ENCODE measurements at regions of chr18 and their contacts with region 1.

Region 1: DNA sequence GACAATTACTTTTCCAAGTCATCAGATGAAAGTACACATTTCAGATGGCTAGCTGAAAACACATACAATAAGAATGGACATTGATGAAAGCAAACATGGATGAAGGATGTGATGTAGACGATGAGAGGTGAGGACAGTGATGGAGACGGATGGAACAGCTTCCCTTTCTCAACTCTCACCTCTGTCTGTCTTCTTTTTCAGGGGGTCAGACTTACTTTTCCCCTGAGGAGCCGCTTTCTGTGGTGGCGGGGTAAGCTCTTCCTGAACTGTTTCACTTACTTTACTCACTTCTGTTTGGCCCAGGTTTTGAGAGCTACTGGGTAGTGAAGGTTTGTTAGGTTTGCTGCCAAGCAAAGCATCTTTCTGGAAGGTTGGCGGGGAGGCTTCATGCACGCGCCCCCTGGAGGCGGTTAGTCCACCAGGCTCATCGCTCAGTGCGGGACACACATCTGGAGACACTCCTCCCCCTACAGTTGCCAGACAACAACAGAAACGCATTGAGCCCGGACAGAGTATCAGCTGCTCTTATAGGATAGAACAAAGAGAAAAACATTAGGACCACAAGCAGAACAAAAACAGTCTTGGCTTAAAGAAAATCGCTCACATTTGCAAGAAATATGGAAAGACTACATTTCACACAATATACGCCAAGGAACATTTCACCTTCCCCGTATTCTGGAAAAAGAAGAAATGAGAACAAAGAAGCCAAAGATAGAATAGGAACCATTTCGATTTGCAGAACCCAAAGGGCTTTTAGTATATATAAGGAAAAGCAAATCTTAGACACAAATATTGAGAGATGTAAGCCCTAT is 90.5 kb downstream of the MYOM1 start:
- DNase-seq: peak; percentile 87
- H3K4me3 ChIP-seq: no peak overlapping the region
- H3K27ac ChIP-seq: no peak overlapping the region
- H3K4me1 ChIP-seq: no peaks in the 10 kb centered on the region
- H3K27me3 ChIP-seq: no peaks in the 10 kb centered on the region
- CTCF ChIP-seq: peak; percentile 95 to 96
- POLR2A ChIP-seq: no peak

Region 2: GRCh38 chr18:2932247-2933181 is 196.7 kb before region 1 on chr18:
- CTCF ChIA-PET with region 1: interaction called, 45 read pairs
- POLR2A ChIA-PET with region 1: no interaction called
- dilution Hi-C with region 1: no loop called
- intact Hi-C with region 1: loop called (anchors 1 kb)
- DNase-seq: peak; percentile 64
- H3K4me3 ChIP-seq: no peak overlapping the region
- H3K27ac ChIP-seq: no peak overlapping the region
- H3K4me1 ChIP-seq: no peaks in the 10 kb centered on the region
- H3K27me3 ChIP-seq: no peaks in the 10 kb centered on the region
- CTCF ChIP-seq: peak; percentile 44 to 48
- POLR2A ChIP-seq: no peak

Region 3: DNA sequence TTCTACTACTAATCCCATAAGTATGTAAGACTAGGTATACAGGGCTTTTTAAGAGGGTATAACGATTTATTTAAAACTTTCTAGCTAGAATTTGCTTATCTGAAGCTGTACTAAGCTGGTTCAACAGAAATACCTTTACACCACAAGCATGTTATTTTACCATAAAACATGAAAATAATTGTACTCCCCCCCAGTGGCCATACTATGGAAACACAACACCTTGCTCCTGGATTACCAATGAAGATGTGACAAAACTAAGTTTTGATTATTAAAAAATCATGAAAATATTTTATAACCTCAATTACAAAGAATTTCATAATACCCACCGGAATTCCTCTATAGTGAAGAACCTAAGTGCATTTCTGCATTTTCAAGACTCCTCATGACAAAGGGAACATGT is 143.6 kb before region 1 on chr18:
- CTCF ChIA-PET with region 1: interaction called, 22 read pairs
- POLR2A ChIA-PET with region 1: no interaction called
- dilution Hi-C with region 1: no loop called
- intact Hi-C with region 1: loop called (anchors 1 kb)
- DNase-seq: peak; percentile 48
- H3K4me3 ChIP-seq: no peak overlapping the region
- H3K27ac ChIP-seq: no peak overlapping the region
- H3K4me1 ChIP-seq: peaks cover 49% of the 10 kb centered on the region
- H3K27me3 ChIP-seq: no peaks in the 10 kb centered on the region
- CTCF ChIP-seq: peak; percentile 26 to 39
- POLR2A ChIP-seq: no peak

Region 4: GRCh38 chr18:3012964-3013804 is 116.1 kb before region 1 on chr18 and contains the start of gene LPIN2:
- CTCF ChIA-PET with region 1: interaction called, 20 read pairs
- POLR2A ChIA-PET with region 1: no interaction called
- dilution Hi-C with region 1: no loop called
- intact Hi-C with region 1: loop called (anchors 1 kb)
- DNase-seq: peak; percentile 98
- H3K4me3 ChIP-seq: peak within 1 kb of the TSS; percentile 74 to 96 (median 94)
- H3K27ac ChIP-seq: peak within 1 kb of the TSS; percentile 90
- H3K4me1 ChIP-seq: peaks cover 67% of the 10 kb centered on the region
- H3K27me3 ChIP-seq: no peaks in the 10 kb centered on the region
- CTCF ChIP-seq: no peak
- POLR2A ChIP-seq: peak; percentile 61
- total RNA-seq, gene LPIN2: 21.8 and 24.4 TPM in 2 replicates

Region 5: DNA sequence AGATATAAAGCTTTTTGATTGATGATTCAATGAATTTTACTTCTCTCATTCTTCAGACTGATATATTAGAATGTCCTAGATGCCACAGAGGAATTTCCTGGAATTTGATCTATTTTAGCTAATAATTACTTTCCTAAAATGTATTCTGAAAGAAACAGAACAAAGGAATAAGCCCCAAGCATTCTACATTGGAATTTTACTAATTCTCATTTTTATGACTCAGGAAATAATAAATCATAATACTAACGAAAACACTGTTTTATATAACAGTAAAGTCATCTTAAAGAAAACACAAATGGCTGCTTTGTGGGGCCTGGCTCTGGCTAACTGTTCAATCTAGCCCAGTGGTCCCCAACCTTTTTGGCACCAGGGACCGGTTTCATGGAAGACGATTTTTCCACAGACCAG is 47.7 kb before region 1 on chr18:
- CTCF ChIA-PET with region 1: interaction called, 4 read pairs
- POLR2A ChIA-PET with region 1: no interaction called
- dilution Hi-C with region 1: no loop called
- intact Hi-C with region 1: loop called (anchors 1 kb)
- DNase-seq: peak; percentile 75
- H3K4me3 ChIP-seq: no peak overlapping the region
- H3K27ac ChIP-seq: peak overlapping the region; percentile 53
- H3K4me1 ChIP-seq: peaks cover 37% of the 10 kb centered on the region
- H3K27me3 ChIP-seq: no peaks in the 10 kb centered on the region
- CTCF ChIP-seq: no peak
- POLR2A ChIP-seq: no peak

Region 6: GRCh38 chr18:3110034-3110752 is 19.1 kb before region 1 on chr18:
- CTCF ChIA-PET with region 1: interaction called, 33 read pairs
- POLR2A ChIA-PET with region 1: no interaction called
- dilution Hi-C with region 1: no loop called
- intact Hi-C with region 1: loop called (anchors 2 kb)
- DNase-seq: no peak
- H3K4me3 ChIP-seq: no peak overlapping the region
- H3K27ac ChIP-seq: no peak overlapping the region
- H3K4me1 ChIP-seq: peaks cover 1% of the 10 kb centered on the region
- H3K27me3 ChIP-seq: no peaks in the 10 kb centered on the region
- CTCF ChIP-seq: no peak
- POLR2A ChIP-seq: no peak

Region 7: GRCh38 chr18:3164381-3164780 is 35.1 kb after region 1 on chr18:
- CTCF ChIA-PET with region 1: no interaction called
- POLR2A ChIA-PET with region 1: no interaction called
- dilution Hi-C with region 1: no loop called
- intact Hi-C with region 1: no loop called
- DNase-seq: no peak
- H3K4me3 ChIP-seq: no peak overlapping the region
- H3K27ac ChIP-seq: no peak overlapping the region
- H3K4me1 ChIP-seq: no peaks in the 10 kb centered on the region
- H3K27me3 ChIP-seq: peaks cover 0 to 2% of the 10 kb centered on the region in 2 experiments
- CTCF ChIP-seq: no peak
- POLR2A ChIP-seq: no peak

Region 8: GRCh38 chr18:3511922-3512372 is 382.7 kb after region 1 on chr18:
- CTCF ChIA-PET with region 1: no interaction called
- POLR2A ChIA-PET with region 1: no interaction called
- dilution Hi-C with region 1: no loop called
- intact Hi-C with region 1: no loop called
- DNase-seq: peak; percentile 44
- H3K4me3 ChIP-seq: no peak overlapping the region
- H3K27ac ChIP-seq: no peak overlapping the region
- H3K4me1 ChIP-seq: no peaks in the 10 kb centered on the region
- H3K27me3 ChIP-seq: no peaks in the 10 kb centered on the region
- CTCF ChIP-seq: no peak
- POLR2A ChIP-seq: no peak

Measured in endothelial cell of umbilical vein (primary cell).